Left lung (tissue), 14 donors: ENCODE measurements at regions of chr19 and their contacts with region 1.

Region 1: DNA sequence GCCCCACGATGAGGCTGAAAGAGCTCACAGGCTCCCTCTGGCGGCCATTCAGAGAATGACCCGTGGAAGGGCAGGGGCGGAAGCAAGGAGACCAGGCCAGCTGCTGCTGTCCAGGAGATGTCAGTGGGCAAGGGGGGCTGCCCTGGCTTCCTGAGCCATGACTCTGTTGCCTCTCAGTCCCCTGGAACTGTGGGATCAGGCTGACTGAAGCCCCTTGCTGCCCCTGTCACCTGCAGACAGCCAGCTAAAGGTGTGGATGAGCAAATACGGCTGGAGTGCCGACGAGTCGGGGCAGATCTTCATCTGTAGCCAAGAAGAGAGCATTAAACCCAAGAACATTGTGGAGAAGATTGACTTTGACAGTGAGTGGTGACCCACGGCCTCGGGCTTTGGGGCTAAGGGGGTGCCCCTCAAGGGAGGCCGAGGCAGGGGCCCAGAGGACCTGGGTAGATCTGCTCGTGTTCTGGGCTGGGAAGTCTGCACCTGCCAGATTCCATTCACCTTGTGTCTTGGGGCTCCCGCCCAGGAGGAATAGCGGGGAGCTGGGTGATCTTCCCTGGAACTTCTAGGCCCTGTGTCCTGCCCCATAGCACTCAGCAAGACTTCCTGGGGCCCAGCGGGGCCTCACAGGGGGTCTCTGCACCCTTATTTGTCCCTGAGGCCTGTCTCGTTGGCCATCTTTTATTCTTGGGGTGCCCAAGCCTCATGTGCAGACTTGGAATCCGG is 12.5 kb upstream of the ACTN4 start:
- DNase-seq: peak in 3 of 4 donors; percentile 75 to 93 (median 79)
- ATAC-seq: peak; percentile 77
- H3K4me3 ChIP-seq: no peak overlapping the region
- H3K27ac ChIP-seq: peak overlapping the region in 1 of 2 donors; percentile 10
- H3K4me1 ChIP-seq: peaks cover 0 to 42% of the 10 kb centered on the region in 2 donors
- H3K27me3 ChIP-seq: no peaks in the 10 kb centered on the region
- CTCF ChIP-seq: peak; percentile 94 to 96

Region 2: DNA sequence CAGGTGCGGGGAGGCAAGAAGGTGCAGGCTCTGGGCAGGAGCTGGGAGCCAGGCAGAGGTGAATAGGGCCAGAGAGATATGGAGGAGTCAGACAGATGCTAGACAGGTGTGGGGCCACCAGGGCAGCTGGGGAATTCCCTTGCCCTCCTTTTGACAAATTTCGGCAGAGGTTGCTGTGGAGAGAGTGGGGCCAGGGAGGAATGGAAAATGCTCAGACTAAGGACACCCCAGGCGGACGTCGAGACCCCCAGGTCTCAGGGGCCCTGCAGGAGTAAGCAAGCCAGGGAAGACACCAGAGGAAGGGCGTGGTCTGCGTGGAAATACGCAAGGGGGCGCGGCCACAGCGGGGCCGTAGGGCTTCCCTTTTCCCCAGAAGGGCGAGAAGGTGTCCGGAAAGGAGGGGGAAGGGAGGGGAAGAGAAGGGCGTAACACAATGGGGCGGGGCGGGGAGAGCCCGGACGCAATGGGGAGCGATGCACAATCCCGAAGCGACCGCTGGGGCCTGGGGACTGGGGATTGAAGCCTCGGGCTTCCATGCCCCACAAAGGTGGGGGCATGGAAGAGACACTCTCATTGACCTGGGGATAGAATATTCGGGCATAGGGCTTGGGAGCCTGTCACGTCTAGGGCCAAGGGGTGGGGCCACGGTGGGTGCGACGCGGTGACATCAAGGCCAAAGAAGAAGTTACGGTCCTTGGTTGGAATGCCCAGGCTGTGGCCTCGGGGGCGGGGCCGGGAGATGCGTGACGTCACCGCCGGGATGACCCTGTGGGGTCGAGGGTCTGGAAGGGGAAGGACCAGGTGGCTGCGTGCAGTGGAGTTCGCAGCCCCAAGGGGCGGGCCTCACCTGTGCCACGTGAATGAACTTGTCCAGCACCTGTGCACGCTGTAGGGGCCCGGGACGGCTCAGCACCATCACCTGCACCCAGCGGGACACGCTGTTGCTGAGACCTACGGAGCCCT is 217.1 kb before region 1 on chr19:
- intact Hi-C with region 1: no loop called
- DNase-seq: peak in 3 of 4 donors; percentile 48 to 96 (median 86)
- ATAC-seq: peak; percentile 92
- H3K4me3 ChIP-seq: peak overlapping the region; percentile 14 to 42
- H3K27ac ChIP-seq: peak overlapping the region in 1 of 2 donors; percentile 83
- H3K4me1 ChIP-seq: peaks cover 9 to 19% of the 10 kb centered on the region in 2 donors
- H3K27me3 ChIP-seq: peaks cover 0 to 8% of the 10 kb centered on the region in 2 donors
- CTCF ChIP-seq: no peak

Region 3: DNA sequence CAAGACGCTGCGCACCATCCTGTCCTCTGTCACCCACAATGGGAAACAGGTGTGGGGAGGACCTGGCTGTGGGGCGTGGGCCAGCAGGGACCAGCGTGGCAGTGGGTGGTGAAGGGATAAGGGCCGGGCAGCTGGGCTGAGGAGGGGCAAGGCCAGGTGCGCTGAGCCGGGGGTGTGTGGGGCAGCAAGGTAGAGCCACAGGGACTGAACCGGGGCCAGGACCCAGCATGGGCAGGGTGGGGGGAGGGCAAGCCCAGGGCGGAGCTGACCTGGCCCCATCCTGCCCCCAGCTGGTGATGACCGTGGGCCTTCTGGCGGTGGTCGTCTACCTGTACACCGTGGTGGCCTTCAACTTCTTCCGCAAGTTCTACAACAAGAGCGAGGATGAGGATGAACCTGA is 54.8 kb before region 1 on chr19:
- intact Hi-C with region 1: no loop called
- DNase-seq: no peak
- ATAC-seq: no peak
- H3K4me3 ChIP-seq: no peak overlapping the region
- H3K27ac ChIP-seq: no peak overlapping the region
- H3K4me1 ChIP-seq: peaks cover 0 to 6% of the 10 kb centered on the region in 2 donors
- H3K27me3 ChIP-seq: no peaks in the 10 kb centered on the region
- CTCF ChIP-seq: no peak

Region 4: GRCh38 chr19:38683393-38684080 is 48.6 kb after region 1 on chr19:
- intact Hi-C with region 1: no loop called
- DNase-seq: peak in 3 of 4 donors; percentile 85 to 94 (median 88)
- ATAC-seq: peak; percentile 90
- H3K4me3 ChIP-seq: no peak overlapping the region
- H3K27ac ChIP-seq: peak overlapping the region; percentile 86 to 96
- H3K4me1 ChIP-seq: peaks cover 41 to 100% of the 10 kb centered on the region in 2 donors
- H3K27me3 ChIP-seq: no peaks in the 10 kb centered on the region
- CTCF ChIP-seq: no peak

Region 5: GRCh38 chr19:38729653-38730469 is 94.9 kb after region 1 on chr19:
- intact Hi-C with region 1: loop called in 1 of 2 experiments (anchors 10 kb)
- DNase-seq: peak in 3 of 4 donors; percentile 61 to 91 (median 65)
- ATAC-seq: peak; percentile 41
- H3K4me3 ChIP-seq: no peak overlapping the region
- H3K27ac ChIP-seq: peak overlapping the region in 1 of 2 donors; percentile 23
- H3K4me1 ChIP-seq: peaks cover 0 to 45% of the 10 kb centered on the region in 2 donors
- H3K27me3 ChIP-seq: no peaks in the 10 kb centered on the region
- CTCF ChIP-seq: peak; percentile 73 to 78

Region 6: DNA sequence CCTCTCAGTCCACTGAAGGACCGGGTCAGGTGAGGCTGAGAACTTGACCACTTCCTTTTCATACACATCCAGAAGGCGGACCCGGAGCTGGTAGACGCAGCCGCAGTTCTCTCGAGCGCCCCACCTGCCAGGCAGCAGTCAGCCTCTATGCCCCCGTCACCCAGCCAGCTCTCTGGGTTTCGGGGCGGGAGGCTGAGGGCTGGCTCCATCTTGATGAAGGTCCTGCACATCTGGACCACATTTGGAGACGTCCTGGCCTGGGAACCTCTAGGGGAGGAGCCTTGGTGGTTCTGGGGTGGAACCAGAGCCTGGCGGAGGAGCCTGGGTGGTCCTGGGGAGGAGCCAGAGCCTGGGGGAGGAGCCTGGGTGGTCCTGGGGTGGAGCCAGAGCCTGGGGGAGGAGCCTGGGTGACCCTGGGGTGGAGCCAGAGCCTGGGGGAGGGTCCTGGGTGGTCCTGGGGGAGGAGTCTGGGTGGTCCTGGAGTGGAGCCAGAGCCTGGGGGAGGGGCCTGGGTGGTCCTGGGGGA is 310.1 kb after region 1 on chr19:
- intact Hi-C with region 1: no loop called
- DNase-seq: no peak
- ATAC-seq: no peak
- H3K4me3 ChIP-seq: no peak overlapping the region
- H3K27ac ChIP-seq: no peak overlapping the region
- H3K4me1 ChIP-seq: peaks cover 3 to 7% of the 10 kb centered on the region in 2 donors
- H3K27me3 ChIP-seq: peaks cover 0 to 11% of the 10 kb centered on the region in 2 donors
- CTCF ChIP-seq: no peak